ENCODE measurements at regions of chr7 and their contacts with region 1.

Region 1: DNA sequence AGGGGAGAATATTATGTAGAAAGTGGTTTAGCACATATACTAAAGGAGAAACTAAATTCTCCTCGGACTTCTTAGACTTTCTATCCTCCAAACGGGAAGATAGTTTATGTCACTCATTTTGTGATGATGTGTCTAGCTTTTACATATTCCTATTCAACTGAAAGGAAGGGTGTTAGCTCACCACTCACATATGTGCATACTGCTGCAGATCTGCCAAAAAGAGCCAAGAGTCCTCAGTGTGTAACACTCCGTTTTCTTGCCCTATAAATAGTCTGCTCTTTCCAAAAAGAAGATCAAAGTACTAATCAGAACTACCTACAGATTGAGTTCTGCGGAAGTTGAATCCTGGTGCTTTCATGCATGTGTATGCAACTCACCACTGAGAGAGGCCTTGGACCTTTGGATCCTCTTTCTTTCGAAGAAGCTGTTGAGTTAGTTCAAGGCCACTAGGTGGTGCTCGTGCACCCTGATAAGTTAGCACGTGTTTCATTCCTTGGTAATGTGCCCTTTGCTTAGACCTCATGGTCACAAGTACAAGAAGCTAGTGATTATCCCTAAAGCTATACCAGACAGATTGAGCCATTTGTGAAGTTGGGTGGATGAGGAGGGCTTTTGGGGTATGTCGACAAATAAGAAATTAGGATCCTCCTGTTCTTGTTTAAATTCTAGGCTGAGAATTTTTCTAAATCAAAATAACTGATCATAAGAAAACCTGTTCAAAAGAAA is 14.1 kb downstream of the YAE1 start:
- DNase-seq: peak; percentile 78
- ATAC-seq: peak; percentile 90

Region 2: GRCh38 chr7:39623018-39623731 is 42.9 kb after region 1 on chr7 and contains the start of gene RALA:
- intact Hi-C with region 1: loop called (anchors 5 kb)
- DNase-seq: peak; percentile 94
- ATAC-seq: peak; percentile 99
- total RNA-seq, gene RALA: 35.7 TPM

Region 3: DNA sequence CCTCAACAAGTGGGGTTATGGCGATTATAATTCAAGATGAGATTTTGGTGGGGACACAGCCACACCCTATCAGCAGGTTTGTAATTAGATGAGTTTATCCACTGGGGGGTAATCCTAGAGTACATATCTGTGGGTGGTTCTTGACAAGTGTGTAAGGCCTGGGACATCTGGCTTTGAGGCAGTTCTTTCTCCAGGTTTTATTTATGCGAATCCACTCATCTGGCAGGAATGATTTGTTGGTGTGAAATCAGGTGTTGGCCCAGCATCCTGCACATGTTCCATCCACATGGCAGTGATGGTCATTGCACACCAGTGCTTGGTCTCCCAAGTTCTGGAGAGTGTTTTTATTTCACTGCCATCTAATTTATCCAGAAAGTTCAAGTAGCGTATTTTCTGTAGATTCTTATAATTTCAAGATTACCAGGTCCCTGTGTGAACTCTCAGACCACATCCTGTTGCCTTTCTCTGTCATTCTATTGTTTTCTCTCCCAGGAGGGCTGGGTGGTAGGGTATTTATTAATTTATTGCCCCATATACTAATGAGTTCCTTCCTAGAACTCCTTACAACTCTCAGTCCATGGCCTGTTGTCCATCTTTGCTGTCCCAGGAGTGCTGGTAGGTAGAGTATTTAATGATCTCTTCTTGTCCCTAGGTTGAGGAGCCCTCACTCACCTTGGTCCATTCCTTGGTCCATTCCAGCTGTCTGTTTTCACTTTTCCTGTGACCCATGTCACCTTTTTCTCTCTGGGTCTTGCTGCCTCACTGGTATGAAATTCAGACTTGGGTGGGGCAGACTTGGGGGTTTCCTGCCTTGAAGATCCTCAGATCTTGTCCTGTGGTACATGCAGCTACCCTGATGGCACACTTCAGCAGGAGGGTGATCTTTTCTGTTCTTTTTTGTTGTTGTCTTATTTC is 53.5 kb after region 1 on chr7:
- intact Hi-C with region 1: no loop called
- DNase-seq: no peak
- ATAC-seq: no peak

Region 4: GRCh38 chr7:39746103-39746819 is 165.9 kb after region 1 on chr7:
- intact Hi-C with region 1: loop called (anchors 1 kb)
- DNase-seq: peak; percentile 76
- ATAC-seq: peak; percentile 71

Region 5: GRCh38 chr7:39838326-39838725 is 258.0 kb after region 1 on chr7:
- intact Hi-C with region 1: loop called (anchors 10 kb)
- DNase-seq: no peak
- ATAC-seq: no peak